Sciatic nerve (tissue), 2 donors: ENCODE measurements at regions of chr11 and their contacts with region 1.

Region 1: DNA sequence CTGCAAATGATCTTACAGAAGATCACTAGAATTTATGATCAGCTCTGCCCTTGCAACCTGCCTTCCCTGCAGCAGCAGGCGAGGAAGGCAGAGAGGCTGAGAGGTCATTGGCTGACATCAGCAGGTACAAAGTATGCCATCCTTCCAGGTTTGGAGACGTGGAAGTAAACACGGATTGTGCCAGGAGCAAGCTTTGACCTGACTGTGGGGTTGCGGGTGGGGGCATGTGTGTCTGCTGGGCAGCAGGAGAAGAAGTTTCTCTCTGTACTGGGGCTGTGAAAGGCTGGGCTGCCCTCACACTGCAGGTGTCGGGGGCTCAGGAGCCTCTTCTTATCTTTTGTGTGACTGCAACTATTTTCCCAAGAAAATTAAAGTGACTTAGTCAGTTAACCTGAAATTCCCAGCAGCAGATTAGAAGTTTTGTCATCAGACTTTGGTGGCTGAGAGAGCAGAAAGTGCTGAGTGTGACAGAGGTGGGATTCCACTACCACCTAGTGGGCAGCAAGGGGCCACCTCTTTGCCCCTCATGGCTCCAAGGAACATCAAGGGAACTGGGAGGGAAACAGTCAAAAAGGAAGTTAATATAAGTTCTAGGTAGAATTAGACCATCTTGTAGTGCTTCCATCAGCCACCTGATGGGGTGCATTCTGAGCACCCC is 565.9 kb downstream of the ETS1 start:
- DNase-seq: no peak
- ATAC-seq: no peak

Region 2: DNA sequence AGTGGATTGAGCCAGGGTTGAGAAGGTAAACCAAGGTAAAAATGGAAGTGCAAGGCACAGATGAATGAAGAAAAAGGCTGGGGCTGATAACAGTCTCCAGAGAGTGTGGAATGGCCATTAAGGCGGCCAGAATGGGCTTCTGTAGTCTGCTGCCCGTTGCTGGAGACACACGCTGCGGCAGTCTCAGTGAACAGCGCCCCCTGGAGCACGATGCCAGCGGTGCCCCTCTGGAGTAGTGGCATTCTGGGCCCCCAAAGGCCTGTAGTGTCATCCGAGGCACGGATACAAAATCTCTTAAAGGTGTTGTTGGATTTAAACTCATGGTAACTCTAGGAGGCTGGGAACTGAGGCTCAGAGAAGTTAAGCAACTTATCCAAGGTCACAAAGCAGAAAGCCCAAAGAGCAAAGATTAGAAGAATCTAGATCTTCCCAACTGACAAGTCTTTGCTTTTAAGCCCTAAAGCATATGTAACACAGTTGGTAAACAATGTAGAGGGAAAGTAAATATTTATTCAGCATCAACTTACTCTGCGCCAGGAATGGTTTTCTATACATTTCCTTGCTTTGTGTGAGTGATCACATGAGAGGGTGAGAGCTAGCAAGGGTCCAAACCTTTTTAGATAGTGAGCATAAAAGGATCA is 827.5 kb after region 1 on chr11:
- intact Hi-C with region 1: loop called (anchors 10 kb)
- DNase-seq: no peak
- ATAC-seq: no peak